CD8-positive, alpha-beta T cell (primary cell): ENCODE measurements at regions of chr12 and their contacts with region 1.

Region 1: DNA sequence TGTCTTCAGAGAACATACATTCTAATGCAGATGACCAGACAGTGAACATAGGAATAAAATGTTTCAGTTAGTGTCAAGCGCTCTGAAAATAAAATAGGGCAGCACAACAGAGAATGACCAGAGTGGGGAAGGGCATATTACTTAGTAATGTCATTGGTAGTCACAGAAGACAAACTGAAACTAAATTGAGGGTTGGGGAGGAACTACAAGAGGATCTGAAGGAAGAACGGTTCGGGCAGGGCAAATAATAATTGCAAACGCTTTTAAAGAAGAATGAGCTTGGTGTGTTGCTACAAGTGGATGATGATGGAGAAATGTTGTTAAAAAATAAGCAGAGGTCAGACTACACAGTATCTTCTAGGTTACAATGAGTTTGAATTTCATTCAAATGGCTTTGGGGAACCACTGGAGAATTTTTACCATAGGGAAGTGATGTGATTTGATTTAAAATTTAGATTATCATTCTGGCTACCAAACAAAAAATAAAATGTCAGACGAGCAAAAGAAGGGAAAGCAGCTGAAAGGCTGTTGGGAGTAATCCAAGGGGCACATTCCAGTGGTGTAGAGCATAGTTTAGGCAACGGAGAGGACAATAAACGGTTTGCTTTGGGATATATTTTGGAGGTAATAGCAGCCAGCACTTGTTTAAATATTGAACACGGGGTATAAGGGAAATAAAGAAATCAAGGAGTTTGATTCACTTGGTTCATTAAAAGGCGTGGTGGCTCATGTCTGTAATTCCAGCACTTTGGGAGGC is 56.3 kb upstream of the SLC6A13 start:
- DNase-seq: no peak
- ATAC-seq: no peak
- H3K4me3 ChIP-seq: no peak overlapping the region
- H3K4me3 Mint-ChIP-seq: no peak overlapping the region
- H3K27ac ChIP-seq: no peak overlapping the region
- H3K27ac Mint-ChIP-seq: no peak overlapping the region
- H3K4me1 ChIP-seq: no peaks in the 10 kb centered on the region
- H3K4me1 Mint-ChIP-seq: peaks cover 10% of the 10 kb centered on the region
- H3K27me3 ChIP-seq: no peaks in the 10 kb centered on the region
- H3K27me3 Mint-ChIP-seq: no peaks in the 10 kb centered on the region
- CTCF ChIP-seq: no peak

Region 2: GRCh38 chr12:291153-291723 is 27.7 kb before region 1 on chr12:
- CTCF ChIA-PET with region 1: interaction called, 3 read pairs
- POLR2A ChIA-PET with region 1: no interaction called
- intact Hi-C with region 1: loop called in 1 of 2 experiments (anchors 1 kb)
- DNase-seq: no peak
- ATAC-seq: no peak
- H3K4me3 ChIP-seq: no peak overlapping the region
- H3K4me3 Mint-ChIP-seq: no peak overlapping the region
- H3K27ac ChIP-seq: no peak overlapping the region
- H3K27ac Mint-ChIP-seq: peak overlapping the region; percentile 6
- H3K4me1 ChIP-seq: peaks cover 3% of the 10 kb centered on the region
- H3K4me1 Mint-ChIP-seq: peaks cover 47% of the 10 kb centered on the region
- H3K27me3 ChIP-seq: no peaks in the 10 kb centered on the region
- H3K27me3 Mint-ChIP-seq: no peaks in the 10 kb centered on the region
- CTCF ChIP-seq: no peak

Region 3: GRCh38 chr12:510071-510825 is 191.3 kb after region 1 on chr12:
- CTCF ChIA-PET with region 1: no interaction called
- POLR2A ChIA-PET with region 1: no interaction called
- intact Hi-C with region 1: no loop called
- DNase-seq: no peak
- ATAC-seq: no peak
- H3K4me3 ChIP-seq: no peak overlapping the region
- H3K4me3 Mint-ChIP-seq: no peak overlapping the region
- H3K27ac ChIP-seq: no peak overlapping the region
- H3K27ac Mint-ChIP-seq: no peak overlapping the region
- H3K4me1 ChIP-seq: no peaks in the 10 kb centered on the region
- H3K4me1 Mint-ChIP-seq: no peaks in the 10 kb centered on the region
- H3K27me3 ChIP-seq: no peaks in the 10 kb centered on the region
- H3K27me3 Mint-ChIP-seq: peaks cover 24% of the 10 kb centered on the region
- CTCF ChIP-seq: no peak